Motor neuron (in vitro differentiated cells): ENCODE measurements at regions of chr2 and their contacts with region 1.

Region 1: GRCh38 chr2:190088917-190089316 is 26.4 kb upstream of the MSTN start:
- ATAC-seq: peak in 4 of 8 experiments; percentile 39 to 64 (median 60)
- H3K4me3 ChIP-seq: no peak overlapping the region
- H3K27ac ChIP-seq: no peak overlapping the region
- H3K4me1 ChIP-seq: no peaks in the 10 kb centered on the region

Region 2: GRCh38 chr2:189899101-189899500 is 189.8 kb before region 1 on chr2:
- in situ Hi-C with region 1: no loop called
- ATAC-seq: no peak
- H3K4me3 ChIP-seq: no peak overlapping the region
- H3K27ac ChIP-seq: no peak overlapping the region
- H3K4me1 ChIP-seq: no peaks in the 10 kb centered on the region

Region 3: GRCh38 chr2:189982777-189983394 is 106.0 kb before region 1 on chr2:
- in situ Hi-C with region 1: no loop called
- ATAC-seq: peak in 3 of 8 experiments; percentile 46 to 66 (median 47)
- H3K4me3 ChIP-seq: no peak overlapping the region
- H3K27ac ChIP-seq: no peak overlapping the region
- H3K4me1 ChIP-seq: no peaks in the 10 kb centered on the region

Region 4: DNA sequence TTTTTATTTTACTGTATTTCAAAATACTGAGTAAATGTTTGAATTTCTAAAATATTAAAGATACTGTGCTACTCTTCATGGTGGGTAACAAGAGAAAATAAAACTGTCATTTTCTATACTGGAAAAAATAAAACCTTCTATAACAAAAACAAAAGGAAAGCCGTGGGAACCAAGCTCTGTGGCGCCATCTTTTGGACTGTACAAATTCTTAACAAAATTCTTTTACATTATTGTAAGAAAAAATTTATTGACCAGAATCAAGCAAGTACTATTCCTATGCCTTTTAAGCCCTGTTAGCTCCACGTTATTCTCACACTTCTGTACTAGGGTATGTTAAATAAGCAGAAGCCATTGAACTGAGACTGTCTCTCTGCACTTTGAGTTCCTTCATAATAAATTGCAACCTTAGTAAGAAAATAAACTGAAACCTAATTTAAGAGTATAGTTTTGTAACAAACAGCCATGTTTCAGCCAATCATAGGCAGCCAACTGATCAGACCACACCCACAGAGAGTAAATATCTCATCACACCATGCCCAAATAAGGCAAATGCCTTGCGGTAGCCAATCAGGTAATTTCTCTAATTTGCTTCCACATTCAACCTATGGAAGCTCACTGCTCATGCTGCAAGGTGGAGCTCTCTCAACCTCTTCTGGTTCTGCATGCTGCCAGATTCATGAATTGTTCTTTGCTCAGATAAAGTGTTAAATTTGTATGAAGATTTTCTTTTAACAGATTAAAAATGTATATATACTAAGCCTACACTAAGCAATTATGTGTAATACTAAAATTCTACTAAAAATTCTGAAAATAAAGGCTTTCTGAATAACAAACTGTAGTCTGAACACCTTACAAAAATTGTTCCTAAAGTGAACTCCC is 188.6 kb after region 1 on chr2:
- in situ Hi-C with region 1: loop called in 3 of 9 experiments (anchors 10 to 25 kb)
- ATAC-seq: peak in 6 of 8 experiments; percentile 16 to 73 (median 56)
- H3K4me3 ChIP-seq: no peak overlapping the region
- H3K27ac ChIP-seq: no peak overlapping the region
- H3K4me1 ChIP-seq: no peaks in the 10 kb centered on the region

Region 5: DNA sequence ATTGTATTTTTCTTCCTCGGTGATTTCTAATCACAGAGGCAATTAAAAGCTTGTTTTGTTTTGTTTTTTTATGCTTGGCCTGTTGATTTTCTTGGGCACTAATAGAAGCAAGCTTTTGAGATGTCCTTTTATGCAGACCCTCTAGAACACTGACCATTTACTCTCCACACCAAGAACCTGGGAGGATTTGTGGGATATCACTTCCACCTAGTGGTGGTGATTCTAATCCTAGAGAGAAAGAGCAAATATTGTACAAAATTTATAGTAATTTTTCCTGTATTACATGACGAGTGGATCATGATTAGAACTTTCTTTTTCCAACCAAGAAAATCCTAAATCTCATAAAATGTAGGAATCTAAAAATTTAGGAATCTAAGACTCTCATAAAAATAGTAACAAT is 422.2 kb after region 1 on chr2:
- in situ Hi-C with region 1: loop called in 2 of 9 experiments (anchors 25 kb)
- ATAC-seq: peak in 3 of 8 experiments; percentile 32 to 59 (median 59)
- H3K4me3 ChIP-seq: no peak overlapping the region
- H3K27ac ChIP-seq: no peak overlapping the region
- H3K4me1 ChIP-seq: no peaks in the 10 kb centered on the region

Region 6: GRCh38 chr2:190804182-190804795 is 715.4 kb after region 1 on chr2:
- in situ Hi-C with region 1: loop called in 1 of 9 experiments (anchors 25 kb)
- ATAC-seq: no peak
- H3K4me3 ChIP-seq: no peak overlapping the region
- H3K27ac ChIP-seq: no peak overlapping the region
- H3K4me1 ChIP-seq: peaks cover 0 to 7% of the 10 kb centered on the region in 2 donors